ENCODE measurements at regions of chr3 and their contacts with region 1.

Region 1: DNA sequence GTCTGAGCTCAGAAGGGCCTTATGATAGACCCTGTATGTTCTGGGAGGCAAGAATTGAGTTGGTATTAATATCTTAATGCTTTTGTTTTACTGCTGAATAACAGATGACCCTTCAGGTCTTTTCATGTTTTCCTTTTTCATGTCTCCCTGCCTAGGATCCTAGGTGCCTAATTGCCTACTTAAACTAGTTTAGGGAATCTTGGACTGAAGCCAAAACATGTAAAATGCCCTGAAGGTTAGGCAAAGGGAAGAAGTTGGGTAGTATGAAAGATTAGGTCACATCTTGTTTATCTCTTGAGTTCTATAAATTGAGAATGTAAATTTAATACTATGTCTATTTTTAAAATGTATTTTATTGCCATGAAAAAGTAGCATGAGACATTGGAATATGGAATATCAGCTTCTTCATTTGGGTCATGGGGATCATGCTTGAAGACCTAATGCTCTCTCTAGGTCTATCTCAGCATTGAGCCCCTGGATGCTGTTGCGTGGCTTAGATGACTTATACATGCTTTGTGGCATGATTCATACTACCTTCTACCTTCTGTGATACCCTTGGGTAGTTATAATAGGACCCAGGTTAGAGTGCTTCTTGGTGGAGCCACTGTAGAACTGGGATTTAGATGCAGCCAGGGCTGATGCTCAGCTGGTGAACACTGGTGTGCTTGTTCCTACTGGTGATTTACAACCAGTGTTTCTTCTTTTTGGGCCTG is 26.4 kb downstream of the RBM6 start:
- DNase-seq: peak; percentile 39
- H3K4me3 ChIP-seq: no peak overlapping the region
- H3K27ac ChIP-seq: no peak overlapping the region
- H3K4me1 ChIP-seq: peaks cover 9% of the 10 kb centered on the region
- H3K27me3 ChIP-seq: no peaks in the 10 kb centered on the region
- CTCF ChIP-seq: no peak

Region 2: GRCh38 chr3:49912881-49913281 is 53.5 kb before region 1 on chr3:
- CTCF ChIA-PET with region 1: no interaction called
- dilution Hi-C with region 1: no loop called
- in situ Hi-C with region 1: no loop called
- intact Hi-C with region 1: no loop called
- DNase-seq: no peak
- H3K4me3 ChIP-seq: no peak overlapping the region
- H3K27ac ChIP-seq: no peak overlapping the region
- H3K4me1 ChIP-seq: no peaks in the 10 kb centered on the region
- H3K27me3 ChIP-seq: no peaks in the 10 kb centered on the region
- CTCF ChIP-seq: no peak

Region 3: GRCh38 chr3:49929331-49930240 is 36.8 kb before region 1 on chr3 and contains the start of gene MON1A:
- CTCF ChIA-PET with region 1: no interaction called
- dilution Hi-C with region 1: no loop called
- in situ Hi-C with region 1: no loop called
- intact Hi-C with region 1: no loop called
- DNase-seq: peak; percentile 89
- H3K4me3 ChIP-seq: peak within 1 kb of the TSS; percentile 65 to 72 (median 66)
- H3K27ac ChIP-seq: no peak within 1 kb of the TSS
- H3K4me1 ChIP-seq: peaks cover 25% of the 10 kb centered on the region
- H3K27me3 ChIP-seq: no peaks in the 10 kb centered on the region
- CTCF ChIP-seq: peak in 1 of 2 donors; percentile 47
- total RNA-seq, gene MON1A: 11.5 to 15.9 TPM

Region 4: DNA sequence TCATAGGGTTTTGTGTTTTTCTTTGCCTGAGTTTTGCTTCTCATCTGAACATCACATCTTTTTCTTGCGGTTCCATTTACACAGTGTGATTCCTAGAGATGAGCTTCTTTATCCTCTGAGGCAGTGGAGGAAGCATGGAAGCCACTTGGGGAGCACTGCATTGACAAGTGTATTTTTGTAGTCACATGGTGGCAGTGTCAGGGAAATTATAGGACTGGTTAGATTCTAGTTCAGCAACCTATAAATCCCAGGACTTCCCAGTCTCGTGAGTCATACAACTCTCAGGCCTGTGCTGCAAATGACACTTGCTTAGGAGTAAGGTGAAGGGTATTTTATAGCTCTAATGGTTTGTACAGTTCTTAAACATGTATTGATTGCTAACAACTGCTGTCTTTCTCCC is 31.9 kb after region 1 on chr3:
- CTCF ChIA-PET with region 1: no interaction called
- dilution Hi-C with region 1: no loop called
- in situ Hi-C with region 1: no loop called
- intact Hi-C with region 1: no loop called
- DNase-seq: peak; percentile 71
- H3K4me3 ChIP-seq: no peak overlapping the region
- H3K27ac ChIP-seq: no peak overlapping the region
- H3K4me1 ChIP-seq: no peaks in the 10 kb centered on the region
- H3K27me3 ChIP-seq: no peaks in the 10 kb centered on the region
- CTCF ChIP-seq: no peak

Region 5: DNA sequence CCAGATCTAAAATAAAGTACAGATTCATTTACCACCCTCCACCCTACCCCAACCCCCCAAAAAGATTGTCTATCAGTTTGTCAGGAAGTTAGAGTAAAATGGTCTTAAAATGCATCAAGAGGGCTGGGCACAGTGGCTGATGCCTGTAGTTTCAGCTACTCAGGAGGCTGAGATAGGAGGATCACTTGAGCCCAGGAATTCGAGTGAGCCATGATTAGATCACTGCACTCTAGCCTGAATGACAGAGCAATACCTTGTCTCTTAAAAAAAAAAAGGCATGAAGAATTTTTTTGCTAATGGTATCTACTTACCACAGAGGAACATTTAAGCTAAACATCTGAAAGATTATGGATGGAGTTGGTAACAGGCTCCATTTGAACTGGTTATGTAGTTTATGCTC is 44.6 kb after region 1 on chr3:
- CTCF ChIA-PET with region 1: no interaction called
- dilution Hi-C with region 1: loop called (anchors 5 kb)
- in situ Hi-C with region 1: no loop called
- intact Hi-C with region 1: no loop called
- DNase-seq: peak; percentile 45
- H3K4me3 ChIP-seq: no peak overlapping the region
- H3K27ac ChIP-seq: no peak overlapping the region
- H3K4me1 ChIP-seq: peaks cover 8% of the 10 kb centered on the region
- H3K27me3 ChIP-seq: no peaks in the 10 kb centered on the region
- CTCF ChIP-seq: no peak